ENCODE measurements at regions of chr18 and their contacts with region 1.

Region 1: GRCh38 chr18:80171054-80171872 is 62.2 kb downstream of the ADNP2 start:
- DNase-seq: peak; percentile 69
- ATAC-seq: peak; percentile 79
- H3K4me3 ChIP-seq: 0 out of 2 replicates have a peak overlapping the region, but pooled peaks have one; percentile 9
- H3K27ac ChIP-seq: no peak overlapping the region
- H3K4me1 ChIP-seq: peaks cover 2% of the 10 kb centered on the region; the same call in 1 of the 2 replicates
- H3K27me3 ChIP-seq: no peaks in the 10 kb centered on the region
- CTCF ChIP-seq: peak; percentile 69
- POLR2A ChIP-seq: no peak
- RAD21 ChIP-seq: peak; percentile 68

Region 2: GRCh38 chr18:80253871-80254492 is 82.7 kb after region 1 on chr18:
- CTCF ChIA-PET with region 1: interaction called, 5 read pairs
- POLR2A ChIA-PET with region 1: no interaction called
- dilution Hi-C with region 1: no loop called
- in situ Hi-C with region 1: no loop called
- intact Hi-C with region 1: loop called (anchors 1 kb)
- DNase-seq: no peak
- ATAC-seq: peak; percentile 28; the same call in 1 of the 2 replicates
- H3K4me3 ChIP-seq: no peak overlapping the region
- H3K27ac ChIP-seq: no peak overlapping the region
- H3K4me1 ChIP-seq: peaks cover 1% of the 10 kb centered on the region; the same call in 1 of the 2 replicates
- H3K27me3 ChIP-seq: no peaks in the 10 kb centered on the region; the same call in 1 of the 2 replicates
- CTCF ChIP-seq: no peak
- POLR2A ChIP-seq: no peak
- RAD21 ChIP-seq: no peak

Measured in IMR-90 (cell line).